Naive thymus-derived CD4-positive, alpha-beta T cell (primary cell): ENCODE measurements at regions of chr7 and their contacts with region 1.

Region 1: DNA sequence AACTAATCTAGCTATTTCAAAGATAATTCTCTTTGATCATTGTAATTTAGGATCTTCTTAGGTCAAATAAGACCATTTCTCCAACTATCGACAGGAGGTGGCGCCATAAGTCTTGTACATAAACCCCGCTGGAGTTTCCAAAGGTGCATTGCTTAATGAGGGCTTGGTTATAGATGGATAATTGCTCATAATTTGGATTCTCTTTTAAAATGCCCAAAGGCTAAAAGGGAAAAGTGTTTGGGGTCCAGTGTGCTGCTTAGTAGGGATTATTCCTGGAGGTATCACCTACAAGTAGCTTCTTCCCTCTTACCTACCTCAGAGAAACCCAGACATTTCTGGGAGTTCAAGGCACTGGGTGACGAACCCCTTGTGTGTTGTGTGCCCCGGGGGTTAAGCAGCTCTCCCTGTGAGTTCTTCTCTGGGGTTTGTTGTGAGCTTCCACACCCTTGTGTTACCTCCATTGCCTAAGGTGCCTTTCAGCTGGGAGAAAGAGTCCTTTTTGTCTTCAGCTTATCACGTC is 75.2 kb downstream of the PAXIP1 start:
- DNase-seq: peak; percentile 19 to 82 (median 73)
- ATAC-seq: peak; percentile 76
- H3K4me3 ChIP-seq: peak overlapping the region; percentile 81
- H3K4me3 Mint-ChIP-seq: peak overlapping the region; percentile 92 to 100 (median 94)
- H3K27ac ChIP-seq: peak overlapping the region; percentile 90
- H3K27ac Mint-ChIP-seq: peak overlapping the region; percentile 95 to 99 (median 98)
- H3K4me1 ChIP-seq: peaks cover 13 to 17% of the 10 kb centered on the region in 2 donors
- H3K4me1 Mint-ChIP-seq: peaks cover 14 to 40% (median 34%) of the 10 kb centered on the region in 7 donors
- H3K27me3 ChIP-seq: no peaks in the 10 kb centered on the region
- H3K27me3 Mint-ChIP-seq: peaks cover 0 to 16% (median 0%) of the 10 kb centered on the region in 5 donors

Region 2: DNA sequence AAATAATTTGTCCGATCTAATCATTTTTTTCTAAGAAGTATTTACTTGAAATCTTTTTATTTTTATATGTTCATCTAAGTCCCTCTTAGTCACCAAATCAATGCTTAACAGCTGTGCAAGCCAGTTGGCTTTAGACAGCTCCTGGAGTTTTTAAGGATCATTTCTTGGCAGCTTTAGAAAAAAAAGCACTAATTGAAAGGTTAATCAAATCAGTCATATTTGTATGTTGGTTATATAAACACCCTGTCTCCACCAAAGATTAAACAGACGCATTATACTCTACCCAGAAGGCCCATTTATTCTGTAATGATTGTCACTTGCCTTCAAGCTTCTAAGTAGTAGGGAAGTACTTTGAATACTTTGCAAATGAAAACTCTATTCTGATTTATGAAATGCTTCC is 15.0 kb after region 1 on chr7:
- CTCF ChIA-PET with region 1: interaction called, 11 read pairs
- POLR2A ChIA-PET with region 1: interaction called, 7 read pairs
- intact Hi-C with region 1: loop called in 1 of 2 experiments (anchors 2 kb)
- DNase-seq: no peak
- ATAC-seq: no peak
- H3K4me3 ChIP-seq: no peak overlapping the region
- H3K4me3 Mint-ChIP-seq: no peak overlapping the region
- H3K27ac ChIP-seq: no peak overlapping the region
- H3K27ac Mint-ChIP-seq: peak overlapping the region in 2 of 9 donors; percentile 32 to 36
- H3K4me1 ChIP-seq: no peaks in the 10 kb centered on the region
- H3K4me1 Mint-ChIP-seq: peaks cover 0 to 28% (median 17%) of the 10 kb centered on the region in 7 donors
- H3K27me3 ChIP-seq: no peaks in the 10 kb centered on the region
- H3K27me3 Mint-ChIP-seq: no peaks in the 10 kb centered on the region

Region 3: DNA sequence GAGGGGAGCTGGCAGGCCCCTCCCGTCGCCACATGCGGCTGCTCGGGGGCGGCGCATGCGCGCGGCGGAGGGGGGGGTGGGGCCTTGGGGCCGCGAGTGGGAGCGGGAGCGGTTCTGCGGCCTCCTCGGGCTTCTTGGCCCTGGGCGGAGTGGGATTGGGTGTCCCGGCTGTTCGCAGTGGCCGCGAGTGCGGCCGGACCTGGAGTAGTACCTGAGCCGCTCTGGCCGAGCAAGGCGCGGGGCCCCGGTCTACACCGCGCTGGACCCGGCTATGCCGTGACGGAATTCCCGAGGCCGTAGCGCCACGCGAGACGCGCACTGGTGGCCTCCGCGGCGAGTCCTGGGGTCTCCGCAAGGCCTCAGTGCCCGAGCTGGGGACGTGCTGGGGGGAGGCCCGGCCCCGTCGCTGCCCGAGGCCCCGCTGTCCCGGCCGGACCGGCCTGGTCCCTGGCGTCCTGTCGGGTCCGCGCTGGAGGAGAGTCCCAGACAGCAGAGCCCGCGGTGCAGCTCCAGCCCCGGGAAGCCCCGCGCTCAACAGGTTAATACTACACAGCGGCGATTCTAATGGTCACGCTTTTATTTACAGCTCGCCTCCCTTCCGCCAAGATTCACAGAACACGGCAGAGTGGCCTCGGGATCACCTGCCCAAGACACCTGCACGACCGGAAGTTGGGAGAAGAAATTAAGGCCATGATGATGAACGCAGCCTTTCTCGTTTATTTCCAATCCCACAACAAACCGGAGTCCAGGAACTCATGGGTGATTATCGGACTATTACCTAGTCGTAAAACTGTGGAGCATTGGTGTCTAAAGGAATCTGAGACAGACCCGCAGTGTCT is 75.9 kb after region 1 on chr7:
- CTCF ChIA-PET with region 1: interaction called, 6 read pairs
- POLR2A ChIA-PET with region 1: interaction called, 16 read pairs
- intact Hi-C with region 1: loop called (anchors 1 kb)
- DNase-seq: peak in 8 of 9 donors; percentile 74 to 93 (median 86)
- ATAC-seq: peak; percentile 93
- H3K4me3 ChIP-seq: peak overlapping the region; percentile 68
- H3K4me3 Mint-ChIP-seq: peak overlapping the region; percentile 91 to 98 (median 94)
- H3K27ac ChIP-seq: peak overlapping the region; percentile 93
- H3K27ac Mint-ChIP-seq: peak overlapping the region; percentile 89 to 96 (median 94)
- H3K4me1 ChIP-seq: peaks cover 0 to 6% of the 10 kb centered on the region in 2 donors
- H3K4me1 Mint-ChIP-seq: peaks cover 12 to 25% (median 16%) of the 10 kb centered on the region in 7 donors
- H3K27me3 ChIP-seq: no peaks in the 10 kb centered on the region
- H3K27me3 Mint-ChIP-seq: no peaks in the 10 kb centered on the region

Region 4: GRCh38 chr7:155190688-155191087 is 263.0 kb after region 1 on chr7:
- CTCF ChIA-PET with region 1: interaction called, 5 read pairs
- POLR2A ChIA-PET with region 1: no interaction called
- intact Hi-C with region 1: loop called (anchors 1 kb)
- DNase-seq: peak in 7 of 9 donors; percentile 28 to 76 (median 48)
- ATAC-seq: peak; percentile 83
- H3K4me3 ChIP-seq: no peak overlapping the region
- H3K4me3 Mint-ChIP-seq: peak overlapping the region in 4 of 10 donors; percentile 32 to 59 (median 48)
- H3K27ac ChIP-seq: no peak overlapping the region
- H3K27ac Mint-ChIP-seq: no peak overlapping the region
- H3K4me1 ChIP-seq: no peaks in the 10 kb centered on the region
- H3K4me1 Mint-ChIP-seq: peaks cover 0 to 17% (median 3%) of the 10 kb centered on the region in 7 donors
- H3K27me3 ChIP-seq: no peaks in the 10 kb centered on the region
- H3K27me3 Mint-ChIP-seq: peaks cover 2 to 17% (median 8%) of the 10 kb centered on the region in 5 donors

Region 5: GRCh38 chr7:155344600-155345433 is 417.1 kb after region 1 on chr7:
- CTCF ChIA-PET with region 1: interaction called, 25 read pairs
- POLR2A ChIA-PET with region 1: interaction called, 4 read pairs
- intact Hi-C with region 1: loop called (anchors 1 kb)
- DNase-seq: peak; percentile 65 to 93 (median 82)
- ATAC-seq: peak; percentile 99
- H3K4me3 ChIP-seq: peak overlapping the region; percentile 35
- H3K4me3 Mint-ChIP-seq: peak overlapping the region in 9 of 10 donors; percentile 47 to 83 (median 69)
- H3K27ac ChIP-seq: no peak overlapping the region
- H3K27ac Mint-ChIP-seq: peak overlapping the region in 1 of 9 donors; percentile 52
- H3K4me1 ChIP-seq: peaks cover 4 to 9% of the 10 kb centered on the region in 2 donors
- H3K4me1 Mint-ChIP-seq: peaks cover 3 to 12% (median 5%) of the 10 kb centered on the region in 7 donors
- H3K27me3 ChIP-seq: peaks cover 0 to 2% of the 10 kb centered on the region in 2 donors
- H3K27me3 Mint-ChIP-seq: peaks cover 0 to 34% (median 7%) of the 10 kb centered on the region in 5 donors

Region 6: DNA sequence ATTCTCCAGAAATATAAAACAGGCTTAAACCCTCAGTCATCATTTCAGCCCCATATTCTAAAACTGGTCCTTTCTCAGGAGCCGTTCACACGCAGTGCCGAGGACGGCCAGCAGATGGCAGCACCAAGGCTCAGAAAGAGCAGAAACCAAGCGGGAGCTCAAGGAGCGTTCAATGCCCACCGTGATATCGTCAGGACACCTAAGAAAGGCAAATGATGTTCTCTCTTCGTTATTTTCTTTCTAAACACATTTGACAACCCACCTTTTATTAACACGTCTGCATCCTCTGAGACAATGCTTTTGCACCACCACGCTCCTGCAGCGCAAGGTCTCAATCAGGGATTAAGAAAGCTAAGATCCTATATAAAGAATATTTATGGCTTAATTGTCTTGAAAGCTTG is 671.1 kb after region 1 on chr7:
- CTCF ChIA-PET with region 1: no interaction called
- POLR2A ChIA-PET with region 1: no interaction called
- intact Hi-C with region 1: loop called (anchors 1 to 5 kb)
- DNase-seq: peak; percentile 52 to 86 (median 75)
- ATAC-seq: peak; percentile 90
- H3K4me3 ChIP-seq: no peak overlapping the region
- H3K4me3 Mint-ChIP-seq: peak overlapping the region in 2 of 10 donors; percentile 21 to 28
- H3K27ac ChIP-seq: no peak overlapping the region
- H3K27ac Mint-ChIP-seq: no peak overlapping the region
- H3K4me1 ChIP-seq: no peaks in the 10 kb centered on the region
- H3K4me1 Mint-ChIP-seq: peaks cover 0 to 9% (median 5%) of the 10 kb centered on the region in 7 donors
- H3K27me3 ChIP-seq: no peaks in the 10 kb centered on the region
- H3K27me3 Mint-ChIP-seq: peaks cover 26 to 38% (median 32%) of the 10 kb centered on the region in 5 donors

Region 7: DNA sequence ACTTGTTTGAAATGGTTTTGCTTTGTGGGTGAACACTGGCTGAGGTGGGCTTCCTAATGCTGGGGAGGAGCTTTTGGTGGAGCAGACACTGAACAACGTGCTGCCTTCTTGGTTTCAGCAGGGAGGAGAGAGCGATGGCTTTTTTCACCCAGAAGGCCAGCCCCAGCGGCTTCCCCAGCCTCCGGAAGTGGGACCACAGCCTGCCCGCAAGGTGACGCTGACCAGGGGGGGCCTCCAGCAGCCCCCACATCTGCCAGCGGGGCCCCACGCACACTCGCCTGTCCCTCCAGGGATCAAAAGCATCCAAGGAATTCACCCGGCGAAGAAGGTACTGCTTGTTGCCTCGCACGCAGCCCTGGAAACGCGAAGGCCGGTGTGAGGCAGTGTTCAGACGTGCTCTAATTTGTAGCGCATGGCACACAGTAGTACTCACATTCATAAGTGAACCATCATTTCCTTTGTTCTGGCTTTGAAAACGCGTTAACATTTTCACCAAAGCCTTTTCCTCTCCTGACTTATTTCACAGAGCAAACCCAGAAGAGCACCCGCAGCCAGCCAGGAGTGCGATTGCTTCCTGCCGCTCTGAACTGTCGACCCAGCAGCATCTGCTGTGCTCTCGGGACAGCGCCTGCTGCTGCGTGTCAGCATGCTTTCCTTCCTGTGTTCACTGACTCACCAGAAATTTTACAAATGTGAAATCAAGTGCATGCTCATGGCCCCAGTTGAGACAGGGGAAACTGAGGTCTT is 836.2 kb after region 1 on chr7:
- CTCF ChIA-PET with region 1: no interaction called
- POLR2A ChIA-PET with region 1: no interaction called
- intact Hi-C with region 1: loop called (anchors 1 kb)
- DNase-seq: peak in 8 of 9 donors; percentile 48 to 73 (median 60)
- ATAC-seq: peak; percentile 80
- H3K4me3 ChIP-seq: peak overlapping the region; percentile 12
- H3K4me3 Mint-ChIP-seq: peak overlapping the region; percentile 64 to 91 (median 80)
- H3K27ac ChIP-seq: peak overlapping the region; percentile 67
- H3K27ac Mint-ChIP-seq: peak overlapping the region; percentile 73 to 98 (median 91)
- H3K4me1 ChIP-seq: peaks cover 24 to 31% of the 10 kb centered on the region in 2 donors
- H3K4me1 Mint-ChIP-seq: peaks cover 39 to 67% (median 61%) of the 10 kb centered on the region in 7 donors
- H3K27me3 ChIP-seq: no peaks in the 10 kb centered on the region
- H3K27me3 Mint-ChIP-seq: no peaks in the 10 kb centered on the region

Region 8: DNA sequence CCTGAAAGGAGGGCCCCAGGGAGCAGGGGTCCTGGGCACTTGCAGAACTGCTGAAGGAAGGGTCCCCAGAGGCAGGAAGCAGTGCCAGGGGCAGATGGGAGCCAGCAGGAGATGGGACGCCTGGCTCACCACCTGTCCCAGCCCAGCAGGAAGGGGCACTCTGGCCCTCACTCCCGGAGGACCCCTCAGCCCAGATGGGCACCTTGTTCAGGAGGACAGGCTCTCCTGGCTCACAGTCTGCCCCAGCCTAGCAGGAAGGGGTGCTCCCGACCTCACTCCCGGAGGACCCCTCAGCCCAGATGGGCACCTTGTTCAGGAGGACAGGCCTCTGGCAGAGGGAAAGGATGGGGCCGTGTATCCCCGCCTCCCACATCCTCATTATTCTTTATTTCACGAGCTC is 1216.0 kb after region 1 on chr7:
- CTCF ChIA-PET with region 1: no interaction called
- POLR2A ChIA-PET with region 1: no interaction called
- intact Hi-C with region 1: no loop called
- DNase-seq: no peak
- ATAC-seq: no peak
- H3K4me3 ChIP-seq: no peak overlapping the region
- H3K4me3 Mint-ChIP-seq: no peak overlapping the region
- H3K27ac ChIP-seq: no peak overlapping the region
- H3K27ac Mint-ChIP-seq: no peak overlapping the region
- H3K4me1 ChIP-seq: no peaks in the 10 kb centered on the region
- H3K4me1 Mint-ChIP-seq: no peaks in the 10 kb centered on the region
- H3K27me3 ChIP-seq: no peaks in the 10 kb centered on the region
- H3K27me3 Mint-ChIP-seq: peaks cover 0 to 17% (median 9%) of the 10 kb centered on the region in 5 donors